Right lobe of liver (tissue), 6 donors: ENCODE measurements at regions of chr9 and their contacts with region 1.

Region 1: DNA sequence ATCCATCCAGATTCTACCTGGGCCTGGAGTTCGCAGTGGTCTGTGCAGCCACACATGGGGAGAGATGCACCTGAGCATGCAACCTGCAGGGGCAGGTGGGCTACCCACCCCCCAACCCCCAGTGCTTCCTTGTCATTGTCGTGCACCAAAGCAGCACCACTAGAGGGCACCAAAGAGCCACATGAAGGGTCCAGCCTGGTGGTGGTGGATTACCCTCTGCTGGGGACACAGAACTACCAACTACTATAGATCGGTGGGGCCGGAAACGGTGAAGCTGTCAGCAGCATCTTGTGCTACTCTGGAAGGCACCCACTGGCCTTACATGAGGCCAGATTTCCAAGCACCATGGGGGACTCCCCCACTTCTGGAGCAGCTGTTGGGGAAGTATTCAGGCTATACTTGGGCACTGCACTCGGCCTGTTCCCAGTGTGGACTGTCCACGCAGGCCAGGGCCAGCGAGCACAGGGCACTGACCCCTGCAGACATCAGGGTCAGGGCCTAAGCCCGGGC is 60.2 kb upstream of the TBC1D2 start:
- DNase-seq: peak; percentile 77 to 86 (median 82)
- ATAC-seq: peak; percentile 95 to 98 (median 97)
- H3K4me3 ChIP-seq: peak overlapping the region in 1 of 3 donors; percentile 5
- H3K27ac ChIP-seq: peak overlapping the region in 1 of 3 donors; percentile 45
- H3K4me1 ChIP-seq: peaks cover 0 to 12% (median 2%) of the 10 kb centered on the region in 4 donors
- H3K27me3 ChIP-seq: no peaks in the 10 kb centered on the region
- CTCF ChIP-seq: peak; percentile 78 to 93 (median 88)
- POLR2A ChIP-seq: no peak

Region 2: DNA sequence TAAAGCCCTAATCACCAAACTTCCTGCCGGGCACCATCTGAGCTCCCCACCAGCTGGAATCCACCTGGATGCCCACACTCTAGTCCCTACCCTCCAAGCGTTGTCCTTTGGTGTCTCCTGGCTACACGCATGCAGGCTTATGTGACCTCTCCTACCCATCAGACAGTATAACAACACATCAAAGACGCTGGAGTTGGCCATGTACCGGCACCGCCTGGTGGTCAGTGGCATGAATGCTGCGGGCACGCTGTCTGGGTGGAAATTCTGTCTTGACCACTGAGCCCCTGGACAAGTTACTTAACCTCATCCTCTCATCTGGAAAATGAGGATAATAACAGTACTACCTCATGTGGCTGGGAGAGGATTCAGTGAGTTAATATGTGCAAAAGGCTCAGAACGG is 99.8 kb before region 1 on chr9:
- intact Hi-C with region 1: no loop called
- DNase-seq: no peak
- ATAC-seq: no peak
- H3K4me3 ChIP-seq: no peak overlapping the region
- H3K27ac ChIP-seq: peak overlapping the region; percentile 53 to 93 (median 83)
- H3K4me1 ChIP-seq: peaks cover 0 to 64% (median 30%) of the 10 kb centered on the region in 4 donors
- H3K27me3 ChIP-seq: no peaks in the 10 kb centered on the region
- CTCF ChIP-seq: peak in 2 of 4 donors; percentile 5 to 9
- POLR2A ChIP-seq: no peak

Region 3: GRCh38 chr9:98707166-98708102 is 391.8 kb after region 1 on chr9:
- intact Hi-C with region 1: loop called in 1 of 2 experiments (anchors 5 kb)
- DNase-seq: peak in 1 of 3 donors; percentile 67
- ATAC-seq: peak; percentile 81 to 95 (median 84)
- H3K4me3 ChIP-seq: no peak overlapping the region
- H3K27ac ChIP-seq: no peak overlapping the region
- H3K4me1 ChIP-seq: peaks cover 0 to 18% (median 4%) of the 10 kb centered on the region in 4 donors
- H3K27me3 ChIP-seq: peaks cover 6 to 24% of the 10 kb centered on the region in 2 donors
- CTCF ChIP-seq: peak; percentile 32 to 58 (median 50)
- POLR2A ChIP-seq: no peak

Region 4: DNA sequence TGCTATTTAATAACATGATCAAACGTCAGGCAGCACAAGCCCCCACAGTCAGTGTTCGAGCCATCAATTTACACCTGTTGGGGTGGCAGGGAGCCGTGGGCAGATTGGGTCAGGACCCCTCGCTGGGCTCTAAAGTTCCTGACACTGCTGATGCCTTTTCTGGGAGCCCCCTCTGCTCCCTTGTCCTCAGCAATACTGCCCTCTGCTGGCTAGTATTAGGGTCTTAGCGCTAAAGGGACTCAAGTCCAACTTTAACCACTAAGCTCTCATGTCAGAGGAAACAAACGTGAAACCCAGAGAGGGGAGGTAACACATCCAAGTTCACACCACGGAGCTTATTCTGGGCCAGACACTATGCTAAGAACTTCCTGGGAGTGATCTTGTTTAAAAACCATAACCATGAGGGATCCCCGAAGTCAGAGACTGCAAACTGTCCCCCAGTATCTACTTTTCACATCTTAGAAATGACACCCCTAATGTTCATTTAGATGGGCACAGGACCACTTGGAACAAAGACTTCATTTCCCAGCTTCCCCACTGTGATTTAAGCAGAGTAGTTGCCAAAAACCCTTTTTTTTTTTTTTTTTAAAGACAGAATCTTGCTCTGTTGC is 460.3 kb after region 1 on chr9:
- intact Hi-C with region 1: loop called (anchors 5 to 10 kb)
- DNase-seq: no peak
- ATAC-seq: peak; percentile 48 to 69 (median 60)
- H3K4me3 ChIP-seq: no peak overlapping the region
- H3K27ac ChIP-seq: no peak overlapping the region
- H3K4me1 ChIP-seq: no peaks in the 10 kb centered on the region
- H3K27me3 ChIP-seq: no peaks in the 10 kb centered on the region
- CTCF ChIP-seq: peak; percentile 53 to 70 (median 66)
- POLR2A ChIP-seq: no peak